CD4-positive, alpha-beta memory T cell (primary cell): ENCODE measurements at regions of chr16 and their contacts with region 1.

Region 1: GRCh38 chr16:46689365-46690280 is at the start of gene ORC6:
- DNase-seq: peak; percentile 97 to 98 (median 97)
- H3K4me3 ChIP-seq: peak within 1 kb of the TSS; percentile 92 to 97
- H3K4me3 Mint-ChIP-seq: no peak within 1 kb of the TSS
- H3K27ac ChIP-seq: peak within 1 kb of the TSS; percentile 92
- H3K27ac Mint-ChIP-seq: no peak within 1 kb of the TSS
- H3K4me1 ChIP-seq: peaks cover 46% of the 10 kb centered on the region
- H3K4me1 Mint-ChIP-seq: peaks cover 26 to 33% (median 30%) of the 10 kb centered on the region in 4 donors
- H3K27me3 ChIP-seq: no peaks in the 10 kb centered on the region
- H3K27me3 Mint-ChIP-seq: no peaks in the 10 kb centered on the region
- total RNA-seq, gene ORC6: 3.0 to 3.3 TPM

Region 2: GRCh38 chr16:46573008-46573833 is 116.4 kb before region 1 on chr16:
- CTCF ChIA-PET with region 1: no interaction called
- POLR2A ChIA-PET with region 1: no interaction called
- intact Hi-C with region 1: no loop called
- DNase-seq: no peak
- H3K4me3 ChIP-seq: no peak overlapping the region
- H3K4me3 Mint-ChIP-seq: peak overlapping the region in 2 of 8 donors; percentile 8 to 38
- H3K27ac ChIP-seq: no peak overlapping the region
- H3K27ac Mint-ChIP-seq: no peak overlapping the region
- H3K4me1 ChIP-seq: no peaks in the 10 kb centered on the region
- H3K4me1 Mint-ChIP-seq: peaks cover 0 to 6% (median 1%) of the 10 kb centered on the region in 4 donors
- H3K27me3 ChIP-seq: no peaks in the 10 kb centered on the region
- H3K27me3 Mint-ChIP-seq: no peaks in the 10 kb centered on the region

Region 3: GRCh38 chr16:46621006-46621933 is 68.4 kb before region 1 on chr16 and contains the start of gene SHCBP1:
- CTCF ChIA-PET with region 1: no interaction called
- POLR2A ChIA-PET with region 1: interaction called, 3 read pairs
- intact Hi-C with region 1: loop called (anchors 2 kb)
- DNase-seq: peak; percentile 60 to 68 (median 63)
- H3K4me3 ChIP-seq: peak within 1 kb of the TSS; percentile 53 to 73
- H3K4me3 Mint-ChIP-seq: peak within 1 kb of the TSS; percentile 89 to 94 (median 90)
- H3K27ac ChIP-seq: no peak within 1 kb of the TSS
- H3K27ac Mint-ChIP-seq: peak within 1 kb of the TSS; percentile 59 to 87 (median 77)
- H3K4me1 ChIP-seq: peaks cover 16% of the 10 kb centered on the region
- H3K4me1 Mint-ChIP-seq: peaks cover 17 to 21% (median 17%) of the 10 kb centered on the region in 4 donors
- H3K27me3 ChIP-seq: no peaks in the 10 kb centered on the region
- H3K27me3 Mint-ChIP-seq: no peaks in the 10 kb centered on the region
- total RNA-seq, gene SHCBP1: 0.36 to 0.55 TPM

Region 4: GRCh38 chr16:46830902-46831647 is 141.5 kb after region 1 on chr16 and contains the start of gene C16orf87:
- CTCF ChIA-PET with region 1: no interaction called
- POLR2A ChIA-PET with region 1: interaction called, 3 read pairs
- intact Hi-C with region 1: loop called (anchors 1 kb)
- DNase-seq: peak; percentile 92 to 95 (median 93)
- H3K4me3 ChIP-seq: peak within 1 kb of the TSS; percentile 74 to 84
- H3K4me3 Mint-ChIP-seq: peak within 1 kb of the TSS; percentile 92 to 100 (median 94)
- H3K27ac ChIP-seq: peak within 1 kb of the TSS; percentile 71
- H3K27ac Mint-ChIP-seq: peak within 1 kb of the TSS; percentile 89 to 99 (median 97)
- H3K4me1 ChIP-seq: peaks cover 41% of the 10 kb centered on the region
- H3K4me1 Mint-ChIP-seq: peaks cover 18 to 37% (median 25%) of the 10 kb centered on the region in 4 donors
- H3K27me3 ChIP-seq: no peaks in the 10 kb centered on the region
- H3K27me3 Mint-ChIP-seq: no peaks in the 10 kb centered on the region
- total RNA-seq, gene C16orf87: 5.8 to 6.2 TPM

Region 5: GRCh38 chr16:46908540-46909372 is 219.1 kb after region 1 on chr16:
- CTCF ChIA-PET with region 1: no interaction called
- POLR2A ChIA-PET with region 1: no interaction called
- intact Hi-C with region 1: loop called (anchors 1 kb)
- DNase-seq: peak; percentile 36 to 59 (median 49)
- H3K4me3 ChIP-seq: no peak overlapping the region
- H3K4me3 Mint-ChIP-seq: no peak overlapping the region
- H3K27ac ChIP-seq: no peak overlapping the region
- H3K27ac Mint-ChIP-seq: no peak overlapping the region
- H3K4me1 ChIP-seq: no peaks in the 10 kb centered on the region
- H3K4me1 Mint-ChIP-seq: peaks cover 2 to 6% (median 4%) of the 10 kb centered on the region in 4 donors
- H3K27me3 ChIP-seq: no peaks in the 10 kb centered on the region
- H3K27me3 Mint-ChIP-seq: no peaks in the 10 kb centered on the region

Region 6: DNA sequence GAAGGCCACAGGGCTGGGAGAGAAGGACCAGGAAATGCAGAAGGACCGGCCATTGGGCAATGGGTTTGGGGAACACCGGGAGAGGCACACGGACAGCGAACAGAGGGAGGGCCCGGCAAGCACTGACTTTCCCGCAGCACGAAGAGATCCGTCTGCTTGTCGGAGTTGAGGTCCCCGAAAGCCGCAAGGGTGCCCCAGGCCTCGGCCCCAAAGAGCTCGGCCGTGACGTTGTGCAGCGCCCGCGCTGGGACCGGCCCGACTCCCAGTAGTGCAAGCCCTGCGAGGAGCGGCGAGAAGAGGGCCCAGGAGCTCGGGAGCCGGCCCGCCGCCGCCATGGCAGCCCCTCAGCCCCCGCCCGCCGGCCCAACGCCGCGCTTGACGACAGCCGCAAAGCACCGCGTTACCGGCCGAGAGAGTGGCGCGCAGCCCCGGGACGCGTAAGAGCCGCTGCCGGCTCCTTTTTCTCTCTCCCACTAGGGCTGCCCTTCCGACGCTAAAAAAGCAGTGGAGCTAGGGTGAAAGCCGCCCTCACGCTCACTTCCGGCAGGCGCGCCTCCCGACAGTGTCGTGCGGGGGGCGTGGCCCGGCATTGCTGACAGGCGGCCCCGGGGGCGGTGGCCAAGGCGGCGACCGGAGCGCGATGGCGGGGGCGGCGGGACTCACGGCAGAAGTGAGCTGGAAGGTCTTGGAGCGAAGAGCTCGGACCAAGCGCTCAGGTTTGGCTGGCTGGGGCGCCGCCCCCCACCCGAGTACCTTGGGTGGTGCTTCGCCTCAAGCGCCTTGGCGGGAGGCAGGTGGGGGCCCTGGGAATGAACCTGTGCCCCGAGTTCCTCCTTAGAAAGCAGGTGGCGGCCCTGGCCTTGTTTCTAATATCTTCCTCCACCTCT is 771.3 kb after region 1 on chr16 and contains the starts of genes ITFG1 and PHKB:
- CTCF ChIA-PET with region 1: no interaction called
- POLR2A ChIA-PET with region 1: no interaction called
- intact Hi-C with region 1: loop called (anchors 2 kb)
- DNase-seq: peak; percentile 95 to 98 (median 97)
- H3K4me3 ChIP-seq: peak within 1 kb of the TSS; percentile 74 to 92
- H3K4me3 Mint-ChIP-seq: peak within 1 kb of the TSS; percentile 92 to 99 (median 96)
- H3K27ac ChIP-seq: peak within 1 kb of the TSS; percentile 82
- H3K27ac Mint-ChIP-seq: peak within 1 kb of the TSS; percentile 87 to 99 (median 97)
- H3K4me1 ChIP-seq: peaks cover 56% of the 10 kb centered on the region
- H3K4me1 Mint-ChIP-seq: peaks cover 35 to 72% (median 60%) of the 10 kb centered on the region in 4 donors
- H3K27me3 ChIP-seq: no peaks in the 10 kb centered on the region
- H3K27me3 Mint-ChIP-seq: no peaks in the 10 kb centered on the region
- total RNA-seq, gene ITFG1: 26.1 to 27.7 TPM
- total RNA-seq, gene PHKB: 50.8 to 56.4 TPM

Region 7: DNA sequence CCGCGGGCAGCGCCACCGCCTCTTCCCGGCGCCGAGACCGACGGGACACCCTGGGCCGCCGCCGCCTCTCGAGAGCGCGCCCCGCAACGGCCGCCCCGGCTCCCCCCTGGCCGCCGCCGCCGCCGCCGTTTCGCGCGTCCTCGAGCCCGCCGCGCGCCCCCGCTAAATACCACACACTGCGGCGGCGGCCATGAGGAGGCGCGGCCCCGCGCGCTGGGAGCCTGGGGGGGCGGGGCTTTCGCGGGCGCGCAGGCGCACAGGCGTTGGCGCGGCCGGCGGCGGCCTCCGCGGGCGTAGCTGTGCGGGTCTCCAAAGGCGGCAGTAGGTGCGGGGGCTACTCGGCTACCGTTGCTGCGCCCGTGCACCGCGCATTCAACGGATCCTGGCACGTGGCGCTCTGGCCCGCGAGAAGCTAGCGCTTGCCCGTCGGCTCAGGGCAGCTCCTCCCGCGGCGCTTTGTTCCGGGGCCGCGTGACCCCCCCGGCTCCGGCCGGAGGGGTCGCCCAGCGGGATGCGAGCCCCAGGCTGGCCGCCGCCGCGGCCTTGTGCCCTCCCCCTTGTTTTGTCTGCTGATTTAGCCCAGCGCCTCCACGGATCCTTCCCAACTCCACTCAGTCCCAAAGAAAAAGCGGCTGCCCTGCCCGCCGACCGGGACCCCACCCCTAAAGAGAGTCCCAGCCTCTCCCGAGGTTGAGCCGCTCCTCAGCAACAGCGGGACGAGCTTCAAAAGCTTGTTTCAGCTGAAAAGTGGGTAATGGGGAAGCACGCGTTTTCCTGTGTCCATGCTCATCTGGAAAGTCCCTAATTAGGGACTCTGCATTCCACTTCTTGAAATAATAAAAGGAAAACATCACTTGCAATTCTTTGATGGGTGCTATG is 1695.9 kb after region 1 on chr16 and contains the start of gene SIAH1:
- CTCF ChIA-PET with region 1: interaction called, 3 read pairs
- POLR2A ChIA-PET with region 1: no interaction called
- intact Hi-C with region 1: loop called (anchors 10 kb)
- DNase-seq: peak; percentile 76 to 91 (median 88)
- H3K4me3 ChIP-seq: peak within 1 kb of the TSS; percentile 63 to 81
- H3K4me3 Mint-ChIP-seq: peak within 1 kb of the TSS; percentile 89 to 97 (median 94)
- H3K27ac ChIP-seq: peak within 1 kb of the TSS; percentile 65
- H3K27ac Mint-ChIP-seq: peak within 1 kb of the TSS; percentile 90 to 97 (median 94)
- H3K4me1 ChIP-seq: peaks cover 29% of the 10 kb centered on the region
- H3K4me1 Mint-ChIP-seq: peaks cover 17 to 29% (median 20%) of the 10 kb centered on the region in 4 donors
- H3K27me3 ChIP-seq: no peaks in the 10 kb centered on the region
- H3K27me3 Mint-ChIP-seq: no peaks in the 10 kb centered on the region
- total RNA-seq, gene SIAH1: 11.9 to 14.9 TPM